Activated B cell treated with CpG ODN at 0.5 μM for 24 hours (primary cell): ENCODE measurements at regions of chr1 and their contacts with region 1.

Region 1: DNA sequence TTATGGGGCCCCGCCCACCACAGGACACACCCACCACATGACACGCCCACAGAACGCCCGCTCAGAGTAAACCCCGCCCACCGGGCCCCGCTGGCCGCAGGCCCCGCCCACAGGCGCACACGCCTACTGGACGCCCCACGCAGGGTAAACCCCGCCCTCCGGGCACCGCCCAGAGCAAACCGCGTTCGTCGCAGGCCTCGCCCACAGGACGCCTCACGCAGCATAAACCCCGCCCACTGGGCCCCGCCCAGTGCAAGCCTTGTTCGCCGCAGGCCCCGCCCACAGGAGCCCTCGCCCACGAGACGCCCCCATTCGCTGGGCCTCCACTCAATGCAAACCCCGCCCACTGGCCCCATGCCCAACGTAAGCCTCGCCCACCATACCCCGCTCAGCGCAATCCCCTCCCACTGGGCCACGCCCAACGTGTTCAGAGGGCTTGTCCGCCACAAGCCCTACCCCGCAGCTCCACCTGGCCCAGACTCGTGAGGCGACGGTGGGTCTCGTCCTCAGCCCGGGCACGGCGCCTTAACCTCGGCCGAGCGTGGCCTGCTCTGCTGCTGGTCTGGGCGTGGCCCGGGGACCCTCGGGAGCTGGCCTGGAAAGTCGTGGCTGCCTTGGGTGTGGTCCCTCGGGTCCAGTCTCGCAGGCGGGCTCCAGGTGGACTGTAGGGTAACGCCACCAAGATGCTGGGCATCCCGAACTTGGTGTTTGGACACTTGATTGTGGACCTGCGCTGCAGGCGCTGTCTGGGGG is 401 bp upstream of the TMEM52 start:
- DNase-seq: peak; percentile 100
- ATAC-seq: peak; percentile 90
- H3K4me3 Mint-ChIP-seq: peak overlapping the region; percentile 73
- H3K27ac Mint-ChIP-seq: peak overlapping the region; percentile 56
- H3K4me1 Mint-ChIP-seq: no peaks in the 10 kb centered on the region
- H3K27me3 Mint-ChIP-seq: no peaks in the 10 kb centered on the region
- CTCF ChIP-seq: no peak

Region 2: GRCh38 chr1:1899266-1899966 is 20.1 kb before region 1 on chr1:
- CTCF ChIA-PET with region 1: no interaction called
- POLR2A ChIA-PET with region 1: no interaction called
- intact Hi-C with region 1: no loop called
- DNase-seq: no peak
- ATAC-seq: peak; percentile 46
- H3K4me3 Mint-ChIP-seq: peak overlapping the region; percentile 59
- H3K27ac Mint-ChIP-seq: no peak overlapping the region
- H3K4me1 Mint-ChIP-seq: peaks cover 35% of the 10 kb centered on the region
- H3K27me3 Mint-ChIP-seq: no peaks in the 10 kb centered on the region
- CTCF ChIP-seq: no peak

Region 3: DNA sequence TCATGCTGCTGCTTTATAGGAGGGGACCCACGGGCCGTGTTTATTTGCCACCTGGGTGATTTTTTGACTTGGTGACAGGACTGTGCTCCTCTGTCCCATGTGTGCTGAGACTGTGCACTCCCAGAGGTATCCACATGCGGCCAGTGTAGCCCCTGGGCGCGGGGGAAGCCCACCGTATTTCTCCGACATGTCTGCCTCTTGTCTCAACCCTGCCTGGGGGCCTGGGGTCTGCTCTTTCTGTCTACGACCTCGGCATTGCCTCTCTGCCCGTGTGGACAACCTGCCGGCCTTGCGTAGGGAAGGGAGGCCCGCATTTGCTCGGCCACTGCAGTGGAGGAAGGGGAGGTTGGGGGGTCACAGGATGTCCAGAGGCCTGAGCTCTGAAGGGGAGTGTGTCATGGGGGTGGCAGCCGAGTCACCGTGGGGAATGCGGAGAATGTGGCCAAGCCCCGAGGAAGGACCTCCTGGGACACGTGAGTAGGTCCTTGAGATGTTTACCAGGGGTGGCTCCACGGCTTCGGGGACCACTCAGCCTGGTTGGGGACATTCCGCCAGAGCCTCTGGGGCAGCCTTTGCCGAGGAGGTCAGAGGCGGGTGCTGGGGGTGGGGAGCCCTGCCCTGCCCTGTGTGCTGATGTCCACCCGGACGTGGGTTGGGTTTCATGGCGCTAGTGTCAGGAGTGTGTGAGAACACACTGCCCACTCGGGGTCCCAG is 141.7 kb after region 1 on chr1:
- CTCF ChIA-PET with region 1: no interaction called
- POLR2A ChIA-PET with region 1: no interaction called
- intact Hi-C with region 1: no loop called
- DNase-seq: no peak
- ATAC-seq: no peak
- H3K4me3 Mint-ChIP-seq: no peak overlapping the region
- H3K27ac Mint-ChIP-seq: no peak overlapping the region
- H3K4me1 Mint-ChIP-seq: no peaks in the 10 kb centered on the region
- H3K27me3 Mint-ChIP-seq: no peaks in the 10 kb centered on the region
- CTCF ChIP-seq: no peak

Region 4: GRCh38 chr1:2391041-2391930 is 471.8 kb after region 1 on chr1 and contains the starts of genes MORN1 and RER1:
- CTCF ChIA-PET with region 1: no interaction called
- POLR2A ChIA-PET with region 1: no interaction called
- intact Hi-C with region 1: loop called (anchors 5 kb)
- DNase-seq: peak; percentile 96
- ATAC-seq: peak; percentile 94
- H3K4me3 Mint-ChIP-seq: peak within 1 kb of the TSS; percentile 88
- H3K27ac Mint-ChIP-seq: peak within 1 kb of the TSS; percentile 68
- H3K4me1 Mint-ChIP-seq: peaks cover 52% of the 10 kb centered on the region
- H3K27me3 Mint-ChIP-seq: no peaks in the 10 kb centered on the region
- CTCF ChIP-seq: no peak
- total RNA-seq, gene MORN1: 15.6 and 17.8 TPM in 2 replicates
- total RNA-seq, gene RER1: 102 and 105 TPM in 2 replicates